ENCODE measurements at regions of chr1 and their contacts with region 1.

Region 1: DNA sequence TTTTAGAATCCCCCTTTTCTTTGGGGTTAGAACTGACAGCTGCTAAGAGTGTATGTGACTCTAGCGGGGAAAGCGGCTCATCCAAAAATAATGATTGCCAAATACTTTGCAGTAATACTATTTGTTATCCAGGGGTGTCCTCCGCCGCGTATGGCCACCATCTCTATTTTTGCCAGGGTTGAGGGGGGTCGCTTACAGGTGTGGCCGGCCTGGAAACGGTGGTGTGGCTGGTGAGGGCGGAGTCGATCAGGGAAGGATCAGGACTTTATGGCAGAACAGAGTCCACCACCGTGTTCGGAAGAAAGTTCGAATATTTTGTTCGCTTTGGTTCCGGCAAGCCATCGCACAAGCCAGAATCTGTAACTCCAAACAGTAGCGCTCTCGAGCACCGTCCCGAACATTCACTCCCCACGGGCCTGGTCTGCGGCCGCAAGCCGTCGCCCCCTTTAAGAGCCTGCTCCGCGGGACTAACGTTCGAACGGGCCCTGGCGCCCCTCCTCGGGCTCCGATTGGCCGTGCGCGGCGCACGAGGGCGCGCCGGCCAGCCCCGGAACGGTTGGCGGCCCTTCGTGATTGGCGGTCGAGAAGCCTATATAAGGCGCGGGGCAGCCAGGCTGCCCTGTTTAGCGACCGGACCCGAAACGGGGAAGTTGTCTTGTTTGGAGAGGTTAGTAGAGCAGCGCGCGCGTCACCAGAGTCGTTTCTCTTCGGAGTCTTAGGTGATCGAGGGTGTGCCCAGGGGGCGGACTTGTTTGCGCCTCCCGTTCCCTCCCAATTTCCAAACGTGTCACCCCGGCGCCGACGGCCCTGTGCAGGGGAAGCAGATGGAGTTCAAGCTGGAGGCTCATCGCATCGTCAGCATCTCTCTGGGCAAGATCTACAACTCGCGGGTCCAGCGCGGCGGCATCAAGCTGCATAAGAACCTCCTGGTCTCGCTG is at the start of gene IER5:
- DNase-seq: peak; percentile 95
- ATAC-seq: peak; percentile 85
- H3K4me3 ChIP-seq: peak within 1 kb of the TSS; percentile 59
- H3K27ac ChIP-seq: peak within 1 kb of the TSS; percentile 86
- H3K4me1 ChIP-seq: peaks cover 3% of the 10 kb centered on the region
- H3K27me3 ChIP-seq: no peaks in the 10 kb centered on the region
- CTCF ChIP-seq: no peak
- POLR2A ChIP-seq: peak; percentile 100
- RAD21 ChIP-seq: peak; percentile 31
- total RNA-seq, gene IER5: 15.8 and 29.4 TPM in 2 replicates

Region 2: GRCh38 chr1:180881806-180882509 is 206.4 kb before region 1 on chr1:
- CTCF ChIA-PET with region 1: no interaction called
- POLR2A ChIA-PET with region 1: no interaction called
- dilution Hi-C with region 1: no loop called
- in situ Hi-C with region 1: no loop called
- intact Hi-C with region 1: loop called (anchors 5 kb)
- DNase-seq: peak; percentile 67
- ATAC-seq: peak; percentile 75
- H3K4me3 ChIP-seq: no peak overlapping the region
- H3K27ac ChIP-seq: no peak overlapping the region
- H3K4me1 ChIP-seq: peaks cover 4% of the 10 kb centered on the region
- H3K27me3 ChIP-seq: no peaks in the 10 kb centered on the region
- CTCF ChIP-seq: peak; percentile 70
- POLR2A ChIP-seq: no peak
- RAD21 ChIP-seq: peak; percentile 62

Region 3: GRCh38 chr1:181021811-181022434 is 66.4 kb before region 1 on chr1:
- CTCF ChIA-PET with region 1: no interaction called
- POLR2A ChIA-PET with region 1: no interaction called
- dilution Hi-C with region 1: no loop called
- in situ Hi-C with region 1: no loop called
- intact Hi-C with region 1: loop called (anchors 5 kb)
- DNase-seq: peak; percentile 73
- ATAC-seq: peak; percentile 49
- H3K4me3 ChIP-seq: peak overlapping the region; percentile 93
- H3K27ac ChIP-seq: peak overlapping the region; percentile 78
- H3K4me1 ChIP-seq: no peaks in the 10 kb centered on the region
- H3K27me3 ChIP-seq: no peaks in the 10 kb centered on the region
- CTCF ChIP-seq: no peak
- POLR2A ChIP-seq: no peak
- RAD21 ChIP-seq: no peak

Region 4: GRCh38 chr1:181105134-181106021 is 17.0 kb after region 1 on chr1:
- CTCF ChIA-PET with region 1: no interaction called
- POLR2A ChIA-PET with region 1: interaction called, 14 read pairs
- dilution Hi-C with region 1: no loop called
- in situ Hi-C with region 1: no loop called
- intact Hi-C with region 1: no loop called
- DNase-seq: peak; percentile 83
- ATAC-seq: peak; percentile 93
- H3K4me3 ChIP-seq: peak overlapping the region; percentile 84
- H3K27ac ChIP-seq: peak overlapping the region; percentile 86
- H3K4me1 ChIP-seq: peaks cover 30% of the 10 kb centered on the region
- H3K27me3 ChIP-seq: no peaks in the 10 kb centered on the region
- CTCF ChIP-seq: no peak
- POLR2A ChIP-seq: peak; percentile 53
- RAD21 ChIP-seq: no peak

Region 5: GRCh38 chr1:181192316-181192715 is 104.0 kb after region 1 on chr1:
- CTCF ChIA-PET with region 1: no interaction called
- POLR2A ChIA-PET with region 1: no interaction called
- dilution Hi-C with region 1: no loop called
- in situ Hi-C with region 1: no loop called
- intact Hi-C with region 1: no loop called
- DNase-seq: no peak
- ATAC-seq: no peak
- H3K4me3 ChIP-seq: no peak overlapping the region
- H3K27ac ChIP-seq: no peak overlapping the region
- H3K4me1 ChIP-seq: no peaks in the 10 kb centered on the region
- H3K27me3 ChIP-seq: peaks cover 14% of the 10 kb centered on the region
- CTCF ChIP-seq: no peak
- POLR2A ChIP-seq: no peak
- RAD21 ChIP-seq: no peak